Natural killer cell (primary cell): ENCODE measurements at regions of chr19 and their contacts with region 1.

Region 1: GRCh38 chr19:55461259-55461973 is at the start of gene ISOC2:
- DNase-seq: peak; percentile 100
- ATAC-seq: peak; percentile 94 to 99 (median 95)
- H3K4me3 ChIP-seq: peak within 1 kb of the TSS; percentile 91
- H3K4me3 Mint-ChIP-seq: peak within 1 kb of the TSS; percentile 95
- H3K27ac ChIP-seq: peak within 1 kb of the TSS; percentile 81
- H3K27ac Mint-ChIP-seq: peak within 1 kb of the TSS; percentile 91 to 92
- H3K4me1 ChIP-seq: peaks cover 15% of the 10 kb centered on the region
- H3K4me1 Mint-ChIP-seq: peaks cover 24 to 32% of the 10 kb centered on the region in 2 donors
- H3K27me3 ChIP-seq: no peaks in the 10 kb centered on the region
- H3K27me3 Mint-ChIP-seq: peaks cover 0 to 4% of the 10 kb centered on the region in 2 donors
- CTCF ChIP-seq: no peak
- total RNA-seq, gene ISOC2: 7.2 to 12.4 (median 9.5) TPM

Region 2: GRCh38 chr19:55426042-55426441 is 35.4 kb before region 1 on chr19:
- intact Hi-C with region 1: no loop called
- DNase-seq: no peak
- ATAC-seq: no peak
- H3K4me3 ChIP-seq: no peak overlapping the region
- H3K4me3 Mint-ChIP-seq: no peak overlapping the region
- H3K27ac ChIP-seq: no peak overlapping the region
- H3K27ac Mint-ChIP-seq: no peak overlapping the region
- H3K4me1 ChIP-seq: peaks cover 7% of the 10 kb centered on the region
- H3K4me1 Mint-ChIP-seq: peaks cover 5 to 6% of the 10 kb centered on the region in 2 donors
- H3K27me3 ChIP-seq: peaks cover under 1% of the 10 kb centered on the region
- H3K27me3 Mint-ChIP-seq: peaks cover 15 to 28% of the 10 kb centered on the region in 2 donors
- CTCF ChIP-seq: no peak

Region 3: GRCh38 chr19:55476100-55476775 is 14.8 kb after region 1 on chr19 and contains the start of gene ZNF628:
- intact Hi-C with region 1: loop called (anchors 2 kb)
- DNase-seq: peak; percentile 97 to 99
- ATAC-seq: peak; percentile 91 to 96 (median 92)
- H3K4me3 ChIP-seq: peak within 1 kb of the TSS; percentile 49
- H3K4me3 Mint-ChIP-seq: peak within 1 kb of the TSS; percentile 89
- H3K27ac ChIP-seq: peak within 1 kb of the TSS; percentile 74
- H3K27ac Mint-ChIP-seq: peak within 1 kb of the TSS; percentile 86 to 90
- H3K4me1 ChIP-seq: peaks cover 20% of the 10 kb centered on the region
- H3K4me1 Mint-ChIP-seq: peaks cover 31 to 37% of the 10 kb centered on the region in 2 donors
- H3K27me3 ChIP-seq: no peaks in the 10 kb centered on the region
- H3K27me3 Mint-ChIP-seq: no peaks in the 10 kb centered on the region
- CTCF ChIP-seq: no peak
- total RNA-seq, gene ZNF628: 20.8 to 28.7 (median 24.1) TPM

Region 4: DNA sequence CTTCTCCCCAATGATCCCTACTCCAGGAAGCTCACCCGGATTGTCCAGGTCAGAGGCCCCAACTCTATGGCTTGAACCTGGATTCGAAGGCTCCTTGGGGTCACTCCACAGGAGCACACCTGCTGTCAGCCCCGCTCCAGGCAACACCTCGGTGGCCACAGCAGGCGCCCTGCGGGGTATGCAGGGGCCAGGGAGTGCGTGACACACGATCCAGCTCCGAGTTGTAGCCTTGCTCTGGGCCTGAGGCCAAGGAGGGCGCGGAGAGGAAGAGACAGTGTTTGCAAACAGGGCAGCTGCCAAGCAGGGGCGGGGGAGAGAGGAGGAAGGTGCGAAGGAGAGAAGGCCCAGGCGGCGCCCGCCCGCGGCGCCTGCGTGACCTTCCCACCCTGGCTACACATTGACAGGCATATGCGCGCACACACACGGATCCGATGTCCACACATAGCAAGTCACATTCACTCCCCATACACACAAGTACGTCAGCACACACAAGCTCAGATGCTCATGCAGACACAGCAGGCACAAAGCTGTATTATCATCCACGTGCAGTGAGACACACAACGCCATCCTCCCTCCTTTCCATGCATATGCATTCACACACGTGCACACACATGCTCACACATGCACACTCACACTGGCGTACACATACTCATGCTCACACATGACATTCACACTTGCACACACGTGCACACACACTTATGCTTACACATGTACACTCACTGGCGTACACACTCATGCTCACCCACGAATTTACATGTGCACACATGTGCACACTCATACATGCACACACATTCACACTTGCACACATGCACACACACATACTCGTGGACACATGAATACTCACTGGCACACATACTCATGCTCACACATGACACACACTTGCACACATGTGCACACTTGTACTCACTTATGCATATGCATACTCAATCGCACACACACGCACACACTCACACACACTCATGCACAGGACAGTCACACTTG is 65.1 kb after region 1 on chr19:
- intact Hi-C with region 1: no loop called
- DNase-seq: no peak
- ATAC-seq: peak; percentile 49 to 79 (median 57)
- H3K4me3 ChIP-seq: no peak overlapping the region
- H3K4me3 Mint-ChIP-seq: no peak overlapping the region
- H3K27ac ChIP-seq: no peak overlapping the region
- H3K27ac Mint-ChIP-seq: no peak overlapping the region
- H3K4me1 ChIP-seq: peaks cover 4% of the 10 kb centered on the region
- H3K4me1 Mint-ChIP-seq: no peaks in the 10 kb centered on the region
- H3K27me3 ChIP-seq: no peaks in the 10 kb centered on the region
- H3K27me3 Mint-ChIP-seq: peaks cover 0 to 3% of the 10 kb centered on the region in 2 donors
- CTCF ChIP-seq: no peak